PC-9 (cell line): ENCODE measurements at regions of chr10 and their contacts with region 1.

Region 1: DNA sequence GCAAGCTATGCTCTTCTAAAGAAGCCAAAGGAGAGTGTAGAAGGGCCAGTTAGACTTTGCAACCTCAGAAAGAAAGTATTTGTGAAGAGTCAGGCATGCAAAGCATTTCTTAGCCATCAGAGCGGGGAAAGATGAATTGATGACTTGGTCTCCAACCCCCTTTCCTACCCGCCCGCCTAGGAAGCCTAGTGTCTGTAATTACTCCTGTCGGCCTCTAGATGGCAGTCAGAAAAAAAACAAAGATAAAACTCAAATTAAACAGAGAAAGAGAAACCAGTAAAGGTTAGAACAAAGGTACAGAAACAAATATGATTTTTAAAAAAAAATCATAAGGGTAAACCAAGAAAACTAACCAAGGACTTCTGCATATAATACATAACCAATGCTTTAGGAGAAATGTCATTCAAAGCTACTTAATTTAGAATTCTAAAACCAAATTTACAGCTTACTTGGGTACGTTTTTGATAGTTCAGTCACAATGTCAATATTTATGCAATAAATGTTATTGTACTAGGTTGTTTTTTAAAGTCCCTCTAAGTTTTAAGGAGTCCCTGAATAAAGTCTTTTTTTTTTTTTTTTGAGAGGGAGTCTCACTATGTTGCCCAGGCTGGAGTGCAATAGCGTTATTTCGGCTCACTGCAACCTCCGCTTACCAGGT is 97.6 kb downstream of the LYZL1 start:
- DNase-seq: peak in 1 of 2 experiments; percentile 15
- H3K4me3 ChIP-seq: no peak overlapping the region
- H3K27ac ChIP-seq: no peak overlapping the region
- H3K4me1 ChIP-seq: no peaks in the 10 kb centered on the region
- H3K27me3 ChIP-seq: no peaks in the 10 kb centered on the region
- CTCF ChIP-seq: peak; percentile 76

Region 2: DNA sequence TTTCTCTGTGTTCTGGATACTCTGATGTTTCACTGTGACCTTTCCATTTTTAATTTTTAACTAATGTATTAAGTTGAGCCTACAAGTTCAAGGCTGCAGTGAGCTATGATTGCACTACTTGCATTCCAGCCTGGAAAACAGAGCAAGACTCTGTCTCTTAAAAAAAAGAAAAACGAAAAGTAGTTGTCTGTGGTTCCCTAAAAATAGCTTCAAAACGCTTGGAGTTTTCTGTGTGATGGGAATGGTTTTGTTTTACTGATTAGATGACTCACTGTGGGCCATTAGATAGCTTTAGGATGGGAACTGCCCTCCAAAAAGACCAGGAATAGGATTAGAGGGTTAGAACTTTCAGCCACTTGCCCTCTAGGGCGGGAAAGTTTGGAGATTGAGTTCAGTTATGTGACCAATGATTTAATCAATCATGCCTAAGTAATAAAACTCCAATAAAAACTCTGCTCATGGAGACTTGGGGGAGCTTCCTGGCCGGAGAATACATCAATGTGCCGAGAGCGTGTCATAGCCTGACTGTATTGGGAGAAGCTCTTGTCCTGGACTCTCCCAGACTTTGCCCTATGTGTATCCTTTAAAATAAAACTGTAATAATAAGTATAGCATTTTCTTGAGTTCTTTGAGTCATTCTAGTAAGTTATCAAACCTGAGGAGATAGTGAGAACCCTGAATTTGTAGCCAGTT is 49.5 kb after region 1 on chr10:
- CTCF ChIA-PET with region 1: interaction called, 12 read pairs
- POLR2A ChIA-PET with region 1: no interaction called
- intact Hi-C with region 1: no loop called
- DNase-seq: no peak
- H3K4me3 ChIP-seq: no peak overlapping the region
- H3K27ac ChIP-seq: no peak overlapping the region
- H3K4me1 ChIP-seq: no peaks in the 10 kb centered on the region
- H3K27me3 ChIP-seq: no peaks in the 10 kb centered on the region
- CTCF ChIP-seq: no peak